ENCODE measurements at regions of chr3 and their contacts with region 1.

Region 1: GRCh38 chr3:104273046-104273649 is 1093.6 kb upstream of the ALCAM start:
- DNase-seq: no peak
- ATAC-seq: peak; percentile 56
- H3K4me3 Mint-ChIP-seq: no peak overlapping the region
- H3K27ac Mint-ChIP-seq: no peak overlapping the region
- H3K4me1 Mint-ChIP-seq: no peaks in the 10 kb centered on the region
- H3K27me3 Mint-ChIP-seq: no peaks in the 10 kb centered on the region
- CTCF ChIP-seq: peak; percentile 72

Region 2: GRCh38 chr3:104596551-104596950 is 323.4 kb after region 1 on chr3:
- CTCF ChIA-PET with region 1: interaction called, 6 read pairs
- POLR2A ChIA-PET with region 1: no interaction called
- intact Hi-C with region 1: loop called (anchors 2 kb)
- DNase-seq: no peak
- ATAC-seq: peak; percentile 67
- H3K4me3 Mint-ChIP-seq: no peak overlapping the region
- H3K27ac Mint-ChIP-seq: no peak overlapping the region
- H3K4me1 Mint-ChIP-seq: peaks cover 3% of the 10 kb centered on the region
- H3K27me3 Mint-ChIP-seq: no peaks in the 10 kb centered on the region
- CTCF ChIP-seq: no peak

Region 3: DNA sequence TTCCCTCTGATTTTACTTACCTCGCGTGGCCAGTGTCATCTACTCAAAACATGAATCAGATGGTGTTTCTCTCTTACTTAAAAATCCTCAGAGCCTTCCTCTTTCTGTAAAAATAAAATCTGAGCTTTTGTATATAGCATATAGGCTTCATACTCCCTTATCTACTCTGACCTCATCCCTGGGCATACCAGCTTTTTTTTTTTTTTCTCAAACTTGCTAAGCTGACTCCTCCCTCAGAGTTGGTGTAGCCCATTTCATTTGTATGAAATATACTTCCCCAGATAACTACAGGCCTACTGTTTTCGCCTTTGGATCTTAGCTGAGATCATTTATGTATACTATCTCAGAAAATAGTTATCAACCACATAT is 444.7 kb after region 1 on chr3:
- CTCF ChIA-PET with region 1: no interaction called
- POLR2A ChIA-PET with region 1: no interaction called
- intact Hi-C with region 1: loop called (anchors 10 kb)
- DNase-seq: no peak
- ATAC-seq: peak; percentile 70
- H3K4me3 Mint-ChIP-seq: peak overlapping the region; percentile 74
- H3K27ac Mint-ChIP-seq: peak overlapping the region; percentile 93
- H3K4me1 Mint-ChIP-seq: peaks cover 29% of the 10 kb centered on the region
- H3K27me3 Mint-ChIP-seq: no peaks in the 10 kb centered on the region
- CTCF ChIP-seq: no peak

Region 4: GRCh38 chr3:105166893-105167292 is 893.7 kb after region 1 on chr3:
- CTCF ChIA-PET with region 1: no interaction called
- POLR2A ChIA-PET with region 1: no interaction called
- intact Hi-C with region 1: loop called (anchors 10 kb)
- DNase-seq: no peak
- ATAC-seq: no peak
- H3K4me3 Mint-ChIP-seq: no peak overlapping the region
- H3K27ac Mint-ChIP-seq: no peak overlapping the region
- H3K4me1 Mint-ChIP-seq: no peaks in the 10 kb centered on the region
- H3K27me3 Mint-ChIP-seq: no peaks in the 10 kb centered on the region
- CTCF ChIP-seq: no peak

Measured in activated B cell treated with CpG ODN at 0.5 μM for 24 hours (primary cell).